Transverse colon (tissue), 4 donors: ENCODE measurements at regions of chr7 and their contacts with region 1.

Region 1: GRCh38 chr7:14717816-14718215 is 184.7 kb downstream of the DGKB start:
- DNase-seq: no peak
- H3K4me3 ChIP-seq: no peak overlapping the region
- H3K27ac ChIP-seq: no peak overlapping the region
- H3K4me1 ChIP-seq: no peaks in the 10 kb centered on the region
- H3K27me3 ChIP-seq: no peaks in the 10 kb centered on the region
- CTCF ChIP-seq: peak; percentile 32 to 55 (median 42)
- EP300 ChIP-seq: no peak
- POLR2A ChIP-seq: no peak

Region 2: GRCh38 chr7:15015545-15016326 is 297.9 kb after region 1 on chr7:
- in situ Hi-C with region 1: loop called in 2 of 4 experiments (anchors 10 kb)
- intact Hi-C with region 1: loop called (anchors 5 kb)
- DNase-seq: no peak
- H3K4me3 ChIP-seq: peak overlapping the region in 1 of 4 donors; percentile 26
- H3K27ac ChIP-seq: peak overlapping the region in 2 of 4 donors; percentile 19 to 32
- H3K4me1 ChIP-seq: peaks cover 0 to 14% (median 8%) of the 10 kb centered on the region in 4 donors
- H3K27me3 ChIP-seq: no peaks in the 10 kb centered on the region
- CTCF ChIP-seq: peak; percentile 45 to 63 (median 60)
- EP300 ChIP-seq: no peak
- POLR2A ChIP-seq: no peak